ENCODE measurements at regions of chr20 and their contacts with region 1.

Region 1: DNA sequence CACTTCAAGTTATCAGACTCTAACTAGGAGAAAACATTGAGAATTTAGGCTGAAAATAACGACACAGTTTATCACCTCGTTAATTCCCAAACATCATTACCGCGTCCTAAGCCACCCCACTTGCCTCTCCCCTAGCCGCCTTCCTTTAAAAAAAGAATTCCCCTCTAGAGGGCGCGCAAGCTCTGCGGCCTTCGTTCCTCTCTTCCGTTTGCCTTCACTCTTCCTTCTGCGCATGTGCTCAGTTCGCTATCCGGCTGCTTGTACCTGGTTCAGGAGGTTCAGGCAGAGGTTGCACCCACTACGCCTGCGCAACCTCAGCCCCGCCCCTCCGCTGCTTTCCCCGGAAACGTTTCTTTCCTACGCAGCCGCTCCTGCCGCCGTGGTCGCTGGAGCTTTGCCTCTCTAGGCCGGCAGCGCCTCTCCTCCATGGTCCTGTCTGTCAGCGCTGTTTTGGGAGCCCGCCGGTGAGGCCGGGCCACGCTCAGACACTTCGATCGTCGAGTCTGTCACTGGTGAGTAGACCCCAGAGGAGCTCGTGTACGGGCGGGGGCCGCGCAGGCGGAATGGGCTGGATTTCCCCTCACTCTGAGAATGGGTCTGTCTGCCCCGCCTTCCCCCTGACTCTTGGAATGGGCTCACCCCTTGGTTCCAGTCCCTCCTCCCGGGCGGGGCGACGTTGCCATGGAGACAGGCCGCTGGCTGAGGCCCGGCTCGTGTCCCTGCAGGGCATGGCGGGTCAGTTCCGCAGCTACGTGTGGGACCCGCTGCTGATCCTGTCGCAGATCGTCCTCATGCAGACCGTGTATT is at the start of gene SYS1:
- DNase-seq: peak; percentile 97 to 99 (median 99)
- ATAC-seq: peak; percentile 90
- H3K4me3 ChIP-seq: peak within 1 kb of the TSS; percentile 92
- H3K4me3 Mint-ChIP-seq: peak within 1 kb of the TSS; percentile 83 to 100 (median 97)
- H3K27ac ChIP-seq: peak within 1 kb of the TSS; percentile 99
- H3K27ac Mint-ChIP-seq: peak within 1 kb of the TSS; percentile 92 to 100 (median 99)
- H3K4me1 ChIP-seq: peaks cover 24 to 30% of the 10 kb centered on the region in 2 donors
- H3K4me1 Mint-ChIP-seq: peaks cover 24 to 56% (median 47%) of the 10 kb centered on the region in 7 donors
- H3K27me3 ChIP-seq: no peaks in the 10 kb centered on the region
- H3K27me3 Mint-ChIP-seq: peaks cover 0 to 2% (median 0%) of the 10 kb centered on the region in 5 donors
- total RNA-seq, gene SYS1: 23.9 to 111 (median 67.1) TPM

Region 2: DNA sequence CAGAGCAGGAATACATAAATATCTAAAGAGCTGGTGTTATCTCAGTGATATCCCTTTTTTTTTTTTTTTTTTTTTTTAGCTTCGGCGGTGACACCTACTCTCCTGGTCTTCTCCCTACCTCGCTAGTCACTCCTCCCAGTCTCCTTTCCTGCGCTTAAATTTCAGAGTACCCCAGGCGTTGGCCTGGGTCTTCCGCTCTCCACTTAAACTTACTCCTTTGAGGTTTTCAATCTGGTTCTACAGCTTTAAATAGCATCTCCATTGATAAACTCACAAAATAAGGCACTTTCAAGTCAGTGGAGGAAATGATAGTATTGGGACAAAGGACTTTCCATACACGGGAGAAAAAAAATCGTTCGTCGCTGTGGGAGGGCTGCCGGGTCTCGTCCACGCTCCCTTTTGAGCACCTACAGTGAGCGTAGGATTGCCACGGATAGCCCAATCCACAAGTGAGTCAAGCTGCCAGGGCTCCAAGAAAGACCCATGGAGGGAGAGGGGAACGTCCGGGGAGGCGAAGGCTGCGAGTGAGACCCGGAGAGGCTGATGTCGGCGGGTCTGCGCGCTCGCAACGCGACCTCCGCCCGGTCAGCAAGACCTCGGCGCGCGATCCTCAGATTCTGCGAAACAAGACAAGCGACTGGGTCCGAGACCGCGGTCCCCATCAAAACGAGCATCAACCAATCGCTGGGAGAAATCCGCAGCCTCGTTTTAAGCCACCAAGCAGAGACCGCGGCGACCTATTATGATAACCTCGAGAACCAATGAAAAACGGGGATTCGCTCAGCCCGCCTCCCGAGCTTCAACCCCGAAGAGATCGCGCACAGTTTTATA is 1906.0 kb before region 1 on chr20:
- CTCF ChIA-PET with region 1: no interaction called
- POLR2A ChIA-PET with region 1: no interaction called
- intact Hi-C with region 1: loop called in 1 of 2 experiments (anchors 5 kb)
- DNase-seq: peak in 7 of 9 donors; percentile 73 to 92 (median 91)
- ATAC-seq: peak; percentile 82
- H3K4me3 ChIP-seq: peak overlapping the region; percentile 86
- H3K4me3 Mint-ChIP-seq: peak overlapping the region; percentile 79 to 100 (median 94)
- H3K27ac ChIP-seq: peak overlapping the region; percentile 100
- H3K27ac Mint-ChIP-seq: peak overlapping the region; percentile 96 to 100 (median 99)
- H3K4me1 ChIP-seq: peaks cover 10 to 29% of the 10 kb centered on the region in 2 donors
- H3K4me1 Mint-ChIP-seq: peaks cover 24 to 42% (median 35%) of the 10 kb centered on the region in 7 donors
- H3K27me3 ChIP-seq: no peaks in the 10 kb centered on the region
- H3K27me3 Mint-ChIP-seq: peaks cover 0 to 14% (median 4%) of the 10 kb centered on the region in 5 donors

Region 3: DNA sequence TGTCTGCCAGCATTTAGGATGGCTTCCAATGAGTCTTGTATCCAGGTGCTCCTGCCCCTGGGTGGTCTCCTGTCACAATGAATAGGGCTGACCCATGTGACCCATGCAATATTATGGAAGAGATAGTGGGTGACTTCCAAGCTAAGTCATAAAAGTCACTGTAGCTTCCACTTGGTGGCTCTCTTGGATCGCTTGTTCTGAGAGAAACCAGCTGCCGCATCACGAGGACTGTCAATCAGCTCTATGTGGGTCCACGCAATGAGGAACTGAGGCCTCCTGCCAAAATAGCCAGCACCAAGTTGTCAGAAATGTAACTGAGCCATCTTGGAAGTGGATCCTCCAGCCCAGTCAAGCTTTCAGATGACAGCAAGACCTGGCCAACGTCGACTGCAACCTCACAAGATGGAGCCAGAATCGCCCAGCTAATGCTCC is 40.0 kb before region 1 on chr20:
- CTCF ChIA-PET with region 1: interaction called, 4 read pairs
- POLR2A ChIA-PET with region 1: interaction called, 5 read pairs
- intact Hi-C with region 1: loop called (anchors 1 kb)
- DNase-seq: no peak
- ATAC-seq: peak; percentile 34
- H3K4me3 ChIP-seq: no peak overlapping the region
- H3K4me3 Mint-ChIP-seq: no peak overlapping the region
- H3K27ac ChIP-seq: no peak overlapping the region
- H3K27ac Mint-ChIP-seq: no peak overlapping the region
- H3K4me1 ChIP-seq: peaks cover 15 to 16% of the 10 kb centered on the region in 2 donors
- H3K4me1 Mint-ChIP-seq: peaks cover 10 to 42% (median 26%) of the 10 kb centered on the region in 7 donors
- H3K27me3 ChIP-seq: no peaks in the 10 kb centered on the region
- H3K27me3 Mint-ChIP-seq: no peaks in the 10 kb centered on the region

Region 4: DNA sequence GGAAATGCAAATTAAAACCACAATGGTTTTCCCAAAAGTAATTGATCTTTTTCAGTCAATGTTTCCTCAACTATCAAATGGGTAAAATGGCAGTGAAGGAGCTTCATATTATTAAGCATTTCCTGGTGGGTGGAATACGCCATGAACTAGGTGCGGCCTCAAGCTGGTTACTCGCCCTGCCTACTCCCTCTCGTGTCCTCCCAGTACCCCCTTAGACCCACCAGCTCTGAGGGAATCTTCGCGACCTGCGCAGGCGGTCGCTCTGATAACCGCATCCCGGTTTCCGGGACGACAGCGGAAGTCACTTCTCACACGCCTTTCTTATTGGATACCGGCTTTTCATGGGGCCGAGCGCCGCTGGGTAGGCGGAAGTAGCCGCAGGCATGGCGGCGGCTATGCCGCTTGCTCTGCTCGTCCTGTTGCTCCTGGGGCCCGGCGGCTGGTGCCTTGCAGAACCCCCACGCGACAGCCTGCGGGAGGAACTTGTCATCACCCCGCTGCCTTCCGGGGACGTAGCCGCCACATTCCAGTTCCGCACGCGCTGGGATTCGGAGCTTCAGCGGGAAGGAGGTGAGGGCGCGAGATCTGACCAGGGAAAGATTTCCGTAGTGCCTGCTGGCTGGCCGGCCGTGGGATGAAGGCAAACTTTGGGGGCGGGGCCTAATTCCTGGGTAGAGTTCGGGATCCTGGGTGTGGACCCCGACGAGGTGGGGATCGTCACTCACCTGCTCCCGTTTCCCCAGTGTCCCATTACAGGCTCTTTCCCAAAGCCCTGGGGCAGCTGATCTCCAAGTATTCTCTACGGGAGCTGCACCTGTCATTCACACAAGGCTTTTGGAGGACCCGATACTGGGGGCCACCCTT is 53.0 kb after region 1 on chr20 and contains the start of gene PIGT:
- CTCF ChIA-PET with region 1: interaction called, 17 read pairs
- POLR2A ChIA-PET with region 1: interaction called, 67 read pairs
- intact Hi-C with region 1: loop called (anchors 1 kb)
- DNase-seq: peak; percentile 71 to 94 (median 93)
- ATAC-seq: peak; percentile 98
- H3K4me3 ChIP-seq: peak within 1 kb of the TSS; percentile 98
- H3K4me3 Mint-ChIP-seq: peak within 1 kb of the TSS; percentile 91 to 97 (median 94)
- H3K27ac ChIP-seq: peak within 1 kb of the TSS; percentile 95
- H3K27ac Mint-ChIP-seq: peak within 1 kb of the TSS; percentile 94 to 99 (median 97)
- H3K4me1 ChIP-seq: peaks cover 12 to 21% of the 10 kb centered on the region in 2 donors
- H3K4me1 Mint-ChIP-seq: peaks cover 17 to 50% (median 32%) of the 10 kb centered on the region in 7 donors
- H3K27me3 ChIP-seq: no peaks in the 10 kb centered on the region
- H3K27me3 Mint-ChIP-seq: no peaks in the 10 kb centered on the region
- total RNA-seq, gene PIGT: 78.7 to 140 (median 85.0) TPM

Region 5: DNA sequence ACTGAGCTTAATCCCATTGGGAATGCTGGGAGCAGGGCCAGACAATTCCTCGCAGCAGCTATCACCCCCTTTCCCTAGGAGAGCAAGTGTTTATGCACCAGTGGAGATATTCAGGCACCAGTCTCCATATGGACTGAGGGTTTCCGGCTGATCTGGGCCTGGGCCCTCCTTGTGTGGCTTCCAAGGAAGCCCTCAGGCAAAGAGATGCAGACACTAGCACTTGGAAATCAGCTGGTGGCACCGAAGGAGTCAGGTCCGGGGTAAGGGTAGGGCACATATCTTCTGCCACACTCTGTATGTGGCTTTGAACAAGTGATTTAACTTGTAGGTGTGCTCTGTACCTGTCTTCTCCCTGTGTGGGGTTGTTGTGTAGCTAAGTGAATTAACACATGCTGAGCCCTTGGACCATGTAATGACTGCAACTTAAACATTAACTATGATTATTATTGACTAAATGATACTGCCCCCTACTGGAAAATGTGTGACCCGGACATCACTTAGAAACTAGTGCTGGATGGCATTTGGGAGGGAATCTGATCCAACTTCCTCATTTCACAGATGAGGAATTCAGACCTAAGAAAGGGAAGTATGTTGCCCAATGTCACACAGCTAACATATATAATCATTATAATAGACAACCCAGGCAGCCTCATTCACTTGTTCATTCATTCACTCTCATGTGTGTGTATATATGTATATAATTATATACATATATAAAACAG is 87.3 kb after region 1 on chr20:
- CTCF ChIA-PET with region 1: interaction called, 13 read pairs
- POLR2A ChIA-PET with region 1: interaction called, 10 read pairs
- intact Hi-C with region 1: loop called (anchors 1 kb)
- DNase-seq: peak in 6 of 9 donors; percentile 19 to 51 (median 38)
- ATAC-seq: peak; percentile 76
- H3K4me3 ChIP-seq: no peak overlapping the region
- H3K4me3 Mint-ChIP-seq: no peak overlapping the region
- H3K27ac ChIP-seq: no peak overlapping the region
- H3K27ac Mint-ChIP-seq: no peak overlapping the region
- H3K4me1 ChIP-seq: no peaks in the 10 kb centered on the region
- H3K4me1 Mint-ChIP-seq: peaks cover 0 to 19% (median 8%) of the 10 kb centered on the region in 7 donors
- H3K27me3 ChIP-seq: peaks cover 0 to 6% of the 10 kb centered on the region in 2 donors
- H3K27me3 Mint-ChIP-seq: peaks cover 0 to 31% (median 3%) of the 10 kb centered on the region in 5 donors

Region 6: DNA sequence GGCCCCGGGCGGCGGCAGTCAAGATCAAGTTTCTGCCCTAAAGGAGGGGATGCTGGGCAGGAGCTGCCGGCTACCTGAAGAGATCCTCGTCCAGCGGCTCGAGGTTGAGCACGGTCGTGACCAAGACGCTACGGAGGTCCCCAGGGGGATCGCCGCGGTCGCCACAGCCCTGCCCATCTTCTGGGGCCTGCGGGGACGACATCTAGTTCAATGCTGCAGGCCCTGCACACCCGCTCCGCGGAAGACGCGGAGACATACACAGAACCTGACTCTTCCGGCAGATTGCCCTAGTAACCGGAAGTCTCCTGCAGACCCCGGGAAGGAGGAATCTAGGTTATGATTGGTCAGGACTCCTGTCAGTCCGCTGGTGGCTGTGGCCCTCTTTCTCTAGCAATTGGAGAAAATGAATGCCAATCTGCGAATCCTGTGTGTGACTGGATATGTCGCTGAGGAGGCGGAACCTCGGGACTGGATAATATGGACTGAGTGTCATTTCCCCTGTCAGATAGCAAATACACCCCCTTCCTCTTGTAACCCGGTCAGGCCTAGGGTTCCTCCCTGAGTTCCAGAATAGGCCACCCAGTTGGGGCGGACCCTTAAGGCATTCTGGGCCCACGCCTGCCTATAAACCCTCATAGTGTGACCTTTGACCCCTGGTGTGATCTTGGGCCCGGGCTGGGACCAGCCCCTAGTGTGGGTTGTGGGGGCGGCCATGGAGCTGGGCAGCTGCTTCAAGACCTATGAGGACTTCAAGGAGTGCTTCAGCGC is 494.3 kb after region 1 on chr20 and contains the starts of genes ACOT8 and ZSWIM3:
- CTCF ChIA-PET with region 1: interaction called, 3 read pairs
- POLR2A ChIA-PET with region 1: no interaction called
- intact Hi-C with region 1: loop called in 1 of 2 experiments (anchors 2 kb)
- DNase-seq: peak; percentile 62 to 100 (median 97)
- ATAC-seq: peak; percentile 99
- H3K4me3 ChIP-seq: peak within 1 kb of the TSS; percentile 94
- H3K4me3 Mint-ChIP-seq: peak within 1 kb of the TSS; percentile 95 to 98 (median 96)
- H3K27ac ChIP-seq: peak within 1 kb of the TSS; percentile 95
- H3K27ac Mint-ChIP-seq: peak within 1 kb of the TSS; percentile 96 to 99 (median 98)
- H3K4me1 ChIP-seq: peaks cover 16 to 26% of the 10 kb centered on the region in 2 donors
- H3K4me1 Mint-ChIP-seq: peaks cover 23 to 76% (median 63%) of the 10 kb centered on the region in 7 donors
- H3K27me3 ChIP-seq: no peaks in the 10 kb centered on the region
- H3K27me3 Mint-ChIP-seq: no peaks in the 10 kb centered on the region
- total RNA-seq, gene ACOT8: 20.5 to 35.5 (median 29.2) TPM
- total RNA-seq, gene ZSWIM3: 1.3 to 6.8 (median 6.0) TPM

Measured in naive thymus-derived CD4-positive, alpha-beta T cell (primary cell).